Mammary epithelial cell (primary cell): ENCODE measurements at regions of chr9 and their contacts with region 1.

Region 1: DNA sequence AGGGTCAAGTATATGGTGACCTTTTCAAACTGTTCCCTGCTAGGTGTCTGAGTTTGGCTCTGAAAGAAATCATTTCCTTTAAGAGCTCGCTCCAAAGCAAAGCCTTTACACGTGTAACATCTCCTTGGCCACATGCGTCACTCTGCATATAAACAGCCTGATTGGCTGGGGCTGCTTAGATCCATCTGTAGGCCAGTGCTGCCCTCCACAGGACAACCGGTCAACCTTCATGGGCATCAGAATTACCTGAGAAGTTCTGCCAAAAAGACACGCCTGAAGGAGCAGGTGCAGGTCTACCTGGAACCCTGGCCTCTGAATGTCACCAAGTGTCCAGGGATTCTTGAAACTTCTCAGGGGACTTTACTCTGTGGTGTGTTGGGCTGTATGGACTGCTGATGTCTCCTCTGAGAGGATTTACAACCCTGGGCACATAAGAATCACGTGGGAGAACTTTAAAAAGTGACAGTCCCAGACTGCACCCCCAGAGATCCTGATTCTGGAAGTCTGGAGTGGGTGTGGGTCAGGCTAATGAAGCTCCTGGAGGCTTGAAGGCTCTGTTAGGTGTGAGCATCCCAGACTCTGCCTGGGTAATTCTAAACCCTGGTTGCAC is 497.6 kb downstream of the GADD45G start:
- DNase-seq: peak; percentile 80
- H3K4me3 ChIP-seq: no peak overlapping the region
- H3K27ac ChIP-seq: no peak overlapping the region
- H3K4me1 ChIP-seq: no peaks in the 10 kb centered on the region
- H3K27me3 ChIP-seq: no peaks in the 10 kb centered on the region
- CTCF ChIP-seq: peak; percentile 66 to 89

Region 2: GRCh38 chr9:89318123-89319014 is 784.0 kb before region 1 on chr9 and contains the start of gene SECISBP2:
- CTCF ChIA-PET with region 1: no interaction called
- dilution Hi-C with region 1: no loop called
- in situ Hi-C with region 1: no loop called
- intact Hi-C with region 1: loop called (anchors 5 kb)
- DNase-seq: peak; percentile 95
- H3K4me3 ChIP-seq: peak within 1 kb of the TSS; percentile 74 to 87 (median 79)
- H3K27ac ChIP-seq: peak within 1 kb of the TSS; percentile 88
- H3K4me1 ChIP-seq: peaks cover 39% of the 10 kb centered on the region
- H3K27me3 ChIP-seq: no peaks in the 10 kb centered on the region
- CTCF ChIP-seq: peak; percentile 74 to 80
- total RNA-seq, gene SECISBP2: 24.5 to 26.5 TPM

Region 3: DNA sequence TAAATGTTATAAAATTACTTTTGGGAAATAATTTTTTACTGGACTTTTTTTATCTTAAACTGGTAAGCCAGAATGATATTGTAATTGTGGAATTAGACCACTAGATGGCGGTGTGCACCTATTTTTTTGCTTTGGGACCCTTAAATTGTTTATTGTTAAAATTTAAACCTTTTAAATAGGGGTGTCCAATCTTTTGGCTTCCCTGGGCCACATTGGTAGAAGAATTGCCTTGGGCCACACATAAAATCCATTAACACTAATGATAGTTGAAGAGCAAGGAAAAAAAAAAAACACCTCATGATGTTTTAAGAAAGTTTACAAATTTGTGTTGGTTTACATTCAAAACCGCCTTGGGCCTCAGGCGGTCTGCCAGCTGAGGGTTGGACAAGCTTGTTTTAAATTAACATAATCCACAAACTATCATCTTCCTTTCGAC is 526.0 kb before region 1 on chr9:
- CTCF ChIA-PET with region 1: no interaction called
- dilution Hi-C with region 1: no loop called
- in situ Hi-C with region 1: no loop called
- intact Hi-C with region 1: loop called (anchors 1 kb)
- DNase-seq: no peak
- H3K4me3 ChIP-seq: no peak overlapping the region
- H3K27ac ChIP-seq: no peak overlapping the region
- H3K4me1 ChIP-seq: no peaks in the 10 kb centered on the region
- H3K27me3 ChIP-seq: no peaks in the 10 kb centered on the region
- CTCF ChIP-seq: peak; percentile 52 to 60